OCI-LY7 (cell line): ENCODE measurements at regions of chr7 and their contacts with region 1.

Region 1: GRCh38 chr7:6350433-6351058 is 78.1 kb upstream of the CYTH3 start:
- DNase-seq: peak; percentile 39
- H3K4me3 ChIP-seq: peak overlapping the region; percentile 19
- H3K27ac ChIP-seq: peak overlapping the region; percentile 80
- H3K4me1 ChIP-seq: peaks cover 38% of the 10 kb centered on the region
- CTCF ChIP-seq: no peak

Region 2: GRCh38 chr7:6317797-6318438 is 32.6 kb before region 1 on chr7:
- CTCF ChIA-PET with region 1: no interaction called
- POLR2A ChIA-PET with region 1: no interaction called
- intact Hi-C with region 1: no loop called
- DNase-seq: no peak
- H3K4me3 ChIP-seq: no peak overlapping the region
- H3K27ac ChIP-seq: no peak overlapping the region
- H3K4me1 ChIP-seq: no peaks in the 10 kb centered on the region
- CTCF ChIP-seq: no peak

Region 3: DNA sequence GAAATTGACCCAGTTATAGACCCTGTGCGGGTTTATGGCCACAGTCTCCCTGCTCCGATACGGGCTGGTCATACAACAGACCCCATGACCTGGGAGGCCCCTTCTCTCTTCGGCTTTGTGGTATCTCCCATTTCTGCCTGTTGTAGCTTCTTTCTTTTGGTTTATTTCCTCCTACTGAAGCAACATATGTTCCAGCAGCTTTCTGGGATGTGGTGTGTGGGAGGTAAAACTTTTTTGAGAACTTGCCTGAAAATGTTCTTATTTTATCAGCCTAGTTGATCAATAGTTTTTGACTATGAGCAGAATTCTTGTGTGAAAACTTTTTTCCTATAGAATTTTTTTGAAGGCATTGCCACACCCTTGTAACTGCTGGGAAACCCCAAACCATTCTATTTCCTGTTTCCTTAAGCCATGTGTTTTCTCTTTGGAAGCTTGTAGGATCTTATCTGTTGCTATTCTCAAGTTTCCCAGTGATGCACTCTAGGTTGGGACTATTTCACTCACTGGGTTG is 17.2 kb after region 1 on chr7:
- CTCF ChIA-PET with region 1: interaction called, 3 read pairs
- POLR2A ChIA-PET with region 1: interaction called, 12 read pairs
- intact Hi-C with region 1: no loop called
- DNase-seq: no peak
- H3K4me3 ChIP-seq: no peak overlapping the region
- H3K27ac ChIP-seq: no peak overlapping the region
- H3K4me1 ChIP-seq: peaks cover 22% of the 10 kb centered on the region
- CTCF ChIP-seq: no peak

Region 4: DNA sequence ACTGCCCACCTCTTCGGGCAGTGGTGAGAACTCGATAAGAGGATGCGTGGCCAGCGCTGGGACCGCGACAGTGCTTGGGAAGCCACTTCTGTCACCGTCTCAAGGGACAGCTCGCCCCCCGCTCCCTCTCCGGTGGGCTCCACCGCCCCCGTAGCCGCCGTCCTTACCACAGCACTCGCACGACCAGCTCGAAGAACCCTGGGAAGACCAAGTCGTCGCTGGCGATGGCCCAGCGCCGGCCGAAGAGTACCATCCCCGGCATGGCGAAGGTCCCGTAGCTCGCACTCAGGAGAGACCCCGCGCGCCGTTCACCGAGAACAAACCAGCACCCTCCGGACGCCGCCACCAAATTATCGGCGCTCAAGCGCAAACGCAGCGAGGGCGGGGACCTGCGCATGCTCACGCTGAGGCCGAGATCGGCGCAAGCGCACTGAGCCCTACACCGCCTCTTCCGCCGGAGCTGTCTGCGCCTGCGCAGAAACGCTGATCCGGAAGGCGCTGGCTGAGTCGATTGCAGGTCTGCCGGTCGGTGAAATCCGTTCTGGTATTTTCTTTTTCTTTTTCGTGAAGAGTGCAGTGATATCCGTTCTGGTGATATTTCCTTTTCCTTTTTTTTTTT is 97.1 kb after region 1 on chr7 and contains the start of gene DAGLB:
- CTCF ChIA-PET with region 1: no interaction called
- POLR2A ChIA-PET with region 1: no interaction called
- intact Hi-C with region 1: no loop called
- DNase-seq: peak; percentile 97
- H3K4me3 ChIP-seq: peak within 1 kb of the TSS; percentile 89
- H3K27ac ChIP-seq: peak within 1 kb of the TSS; percentile 58
- H3K4me1 ChIP-seq: peaks cover 13% of the 10 kb centered on the region
- CTCF ChIP-seq: no peak
- total RNA-seq, gene DAGLB: 12.4 and 17.5 TPM in 2 replicates